Caco-2 (cell line): ENCODE measurements at regions of chr1 and their contacts with region 1.

Region 1: DNA sequence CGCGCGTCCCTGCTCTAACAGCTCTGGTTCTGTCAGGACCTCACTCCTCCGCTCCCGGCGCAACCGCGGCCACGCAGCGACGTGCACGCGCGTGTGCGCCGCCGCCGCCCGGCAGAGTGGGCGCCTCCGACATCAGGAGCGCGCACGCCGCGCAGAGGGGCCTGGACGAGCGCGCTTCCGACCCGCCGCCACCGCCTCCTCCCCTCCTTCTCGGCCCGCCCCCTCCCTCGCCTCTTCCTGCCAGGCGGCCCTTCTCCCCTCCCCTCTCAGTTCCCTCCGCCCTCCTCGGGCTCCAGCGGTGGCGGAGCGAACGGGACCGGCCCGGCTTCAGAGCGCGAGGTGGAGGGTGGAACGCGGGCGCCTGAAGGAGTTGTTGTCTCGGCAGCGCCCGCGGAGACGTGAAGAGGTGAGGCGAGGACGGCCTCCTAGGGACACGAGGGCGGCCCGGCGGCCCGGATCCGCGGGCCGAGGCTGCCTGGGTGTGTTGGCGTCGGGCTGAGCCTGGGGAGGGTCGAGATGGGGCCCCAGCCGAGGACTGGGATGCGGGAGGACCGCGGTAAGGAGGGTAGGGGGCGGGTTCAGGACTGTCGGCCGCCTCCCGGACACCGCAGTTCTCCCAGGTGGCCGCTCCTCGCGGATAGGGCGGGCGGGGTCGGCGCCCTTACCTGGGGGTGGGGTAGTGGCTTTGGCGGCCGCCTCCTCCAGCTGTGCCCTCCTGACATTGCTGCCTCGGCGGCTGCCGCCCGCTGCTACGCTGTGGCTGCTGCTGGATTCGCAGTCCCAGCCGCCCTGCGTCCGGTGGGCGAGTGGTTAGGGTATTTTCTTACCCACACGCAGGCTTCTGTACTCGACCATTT is at the start of gene RABGAP1L:
- DNase-seq: peak; percentile 95
- H3K4me3 ChIP-seq: peak within 1 kb of the TSS; percentile 98
- H3K4me3 Mint-ChIP-seq: peak within 1 kb of the TSS; percentile 87
- H3K27ac Mint-ChIP-seq: peak within 1 kb of the TSS; percentile 50
- H3K4me1 ChIP-seq: peaks cover 12% of the 10 kb centered on the region
- H3K4me1 Mint-ChIP-seq: peaks cover 16% of the 10 kb centered on the region
- H3K27me3 ChIP-seq: no peaks in the 10 kb centered on the region
- H3K27me3 Mint-ChIP-seq: no peaks in the 10 kb centered on the region
- CTCF ChIP-seq: no peak
- total RNA-seq, gene RABGAP1L: 20.3 and 20.4 TPM in 2 replicates

Region 2: GRCh38 chr1:173867753-173868265 is 291.7 kb before region 1 on chr1 and contains the start of gene GAS5:
- CTCF ChIA-PET with region 1: no interaction called
- POLR2A ChIA-PET with region 1: no interaction called
- intact Hi-C with region 1: loop called (anchors 5 kb)
- DNase-seq: peak; percentile 99 to 100
- H3K4me3 ChIP-seq: peak within 1 kb of the TSS; percentile 82
- H3K4me3 Mint-ChIP-seq: peak within 1 kb of the TSS; percentile 99
- H3K27ac Mint-ChIP-seq: peak within 1 kb of the TSS; percentile 100
- H3K4me1 ChIP-seq: peaks cover 13% of the 10 kb centered on the region; the same call in 1 of the 2 replicates
- H3K4me1 Mint-ChIP-seq: peaks cover 12% of the 10 kb centered on the region
- H3K27me3 ChIP-seq: no peaks in the 10 kb centered on the region
- H3K27me3 Mint-ChIP-seq: peaks cover 5% of the 10 kb centered on the region
- CTCF ChIP-seq: no peak
- total RNA-seq, gene GAS5: 559 and 641 TPM in 2 replicates

Region 3: DNA sequence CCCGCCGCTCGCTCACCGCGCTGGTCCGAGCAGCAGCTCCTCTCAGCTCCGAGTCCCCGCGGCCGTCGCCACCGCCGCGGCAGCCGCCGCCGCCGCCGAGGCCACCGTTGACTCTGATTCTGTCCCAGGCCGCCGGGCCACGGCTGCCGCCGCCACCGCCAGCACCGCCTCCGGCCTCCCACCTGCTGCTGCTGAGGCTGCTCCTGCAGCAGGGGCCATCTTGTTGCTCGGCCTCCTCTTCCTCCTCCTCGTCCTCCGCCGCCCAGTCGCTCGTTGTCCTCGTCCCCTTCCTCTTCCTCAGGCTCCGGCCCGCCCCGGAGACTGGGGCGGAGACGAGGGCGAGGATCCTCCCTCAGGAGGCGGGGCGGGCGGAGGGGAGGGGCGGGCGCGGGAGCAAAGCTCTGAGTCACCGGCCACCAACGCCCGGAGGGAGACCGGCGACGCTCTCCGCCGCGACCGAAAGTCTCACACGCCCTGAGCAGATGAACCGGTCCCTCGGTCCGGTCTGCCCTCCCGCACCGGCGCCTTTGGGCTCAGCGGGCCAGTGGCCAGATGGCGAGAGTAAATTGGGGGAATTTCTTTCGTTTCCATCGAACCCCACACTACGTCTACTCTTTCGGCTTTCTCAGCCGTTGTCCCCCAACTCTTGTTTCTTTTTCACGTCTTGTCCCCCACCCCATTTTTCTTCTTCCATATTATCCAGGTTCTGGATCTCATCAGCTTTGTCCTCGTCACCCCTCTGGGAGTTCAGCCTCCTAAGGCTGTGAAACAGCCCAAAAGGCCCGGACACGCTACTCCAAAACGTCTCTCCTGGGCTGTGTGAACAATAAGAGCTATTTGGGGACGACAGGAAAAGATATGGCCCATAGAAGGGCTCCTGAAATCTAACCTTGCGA is 137.2 kb before region 1 on chr1 and contains the start of gene RC3H1:
- CTCF ChIA-PET with region 1: no interaction called
- POLR2A ChIA-PET with region 1: no interaction called
- intact Hi-C with region 1: loop called (anchors 1 kb)
- DNase-seq: peak; percentile 88
- H3K4me3 ChIP-seq: peak within 1 kb of the TSS; percentile 83
- H3K4me3 Mint-ChIP-seq: peak within 1 kb of the TSS; percentile 84
- H3K27ac Mint-ChIP-seq: peak within 1 kb of the TSS; percentile 97
- H3K4me1 ChIP-seq: peaks cover 14% of the 10 kb centered on the region
- H3K4me1 Mint-ChIP-seq: peaks cover 7% of the 10 kb centered on the region
- H3K27me3 ChIP-seq: no peaks in the 10 kb centered on the region
- H3K27me3 Mint-ChIP-seq: no peaks in the 10 kb centered on the region
- CTCF ChIP-seq: no peak
- total RNA-seq, gene RC3H1: 29.2 and 36.3 TPM in 2 replicates

Region 4: GRCh38 chr1:174040387-174040786 is 119.1 kb before region 1 on chr1:
- CTCF ChIA-PET with region 1: no interaction called
- POLR2A ChIA-PET with region 1: no interaction called
- intact Hi-C with region 1: no loop called
- DNase-seq: no peak
- H3K4me3 ChIP-seq: no peak overlapping the region
- H3K4me3 Mint-ChIP-seq: no peak overlapping the region
- H3K27ac Mint-ChIP-seq: no peak overlapping the region
- H3K4me1 ChIP-seq: no peaks in the 10 kb centered on the region
- H3K4me1 Mint-ChIP-seq: no peaks in the 10 kb centered on the region
- H3K27me3 ChIP-seq: no peaks in the 10 kb centered on the region
- H3K27me3 Mint-ChIP-seq: no peaks in the 10 kb centered on the region
- CTCF ChIP-seq: no peak

Region 5: DNA sequence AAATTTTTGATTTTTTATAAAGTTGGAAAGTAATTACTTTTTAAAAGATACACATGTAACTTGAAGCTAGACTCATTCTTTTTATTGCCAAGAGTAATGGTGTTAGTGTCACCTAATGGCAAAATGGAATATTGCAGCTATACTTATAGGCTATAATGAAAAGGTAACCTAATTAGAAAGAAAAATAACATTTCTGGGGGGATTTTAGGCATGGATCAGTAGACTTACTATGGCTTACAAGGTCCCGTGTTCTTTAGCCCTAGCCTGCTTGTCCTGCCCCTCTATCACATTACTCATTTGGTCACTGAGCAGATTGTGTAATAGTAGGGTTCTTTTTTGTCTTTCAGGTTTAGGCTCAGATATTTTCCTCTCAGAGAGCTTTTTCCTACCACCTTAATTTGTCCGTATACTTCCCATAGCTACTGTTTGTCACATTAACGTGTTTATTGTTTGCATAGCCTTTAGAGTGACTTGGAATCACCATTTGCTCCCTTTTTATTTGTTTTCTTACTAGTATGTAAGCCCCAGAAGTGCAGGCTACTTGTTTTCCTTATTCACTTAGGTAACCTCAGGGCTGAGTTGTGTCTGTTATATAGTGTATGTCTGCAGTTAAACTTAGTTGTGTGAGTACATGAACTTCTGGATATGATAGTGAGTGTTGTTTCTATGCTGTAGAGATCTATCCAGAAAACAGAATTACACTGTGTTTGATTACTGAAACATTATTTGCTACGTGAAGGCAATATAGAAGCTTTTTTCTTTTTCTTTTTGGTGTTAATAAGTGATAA is 58.5 kb after region 1 on chr1:
- CTCF ChIA-PET with region 1: interaction called, 4 read pairs
- POLR2A ChIA-PET with region 1: no interaction called
- intact Hi-C with region 1: loop called (anchors 5 kb)
- DNase-seq: peak in 1 of 2 experiments; percentile 24
- H3K4me3 ChIP-seq: no peak overlapping the region
- H3K4me3 Mint-ChIP-seq: no peak overlapping the region
- H3K27ac Mint-ChIP-seq: no peak overlapping the region
- H3K4me1 ChIP-seq: no peaks in the 10 kb centered on the region
- H3K4me1 Mint-ChIP-seq: no peaks in the 10 kb centered on the region
- H3K27me3 ChIP-seq: no peaks in the 10 kb centered on the region
- H3K27me3 Mint-ChIP-seq: no peaks in the 10 kb centered on the region
- CTCF ChIP-seq: peak; percentile 64 to 75

Region 6: GRCh38 chr1:174743654-174744561 is 584.4 kb after region 1 on chr1:
- CTCF ChIA-PET with region 1: no interaction called
- POLR2A ChIA-PET with region 1: no interaction called
- intact Hi-C with region 1: loop called (anchors 10 kb)
- DNase-seq: no peak
- H3K4me3 ChIP-seq: no peak overlapping the region
- H3K4me3 Mint-ChIP-seq: no peak overlapping the region
- H3K27ac Mint-ChIP-seq: no peak overlapping the region
- H3K4me1 ChIP-seq: no peaks in the 10 kb centered on the region
- H3K4me1 Mint-ChIP-seq: no peaks in the 10 kb centered on the region
- H3K27me3 ChIP-seq: no peaks in the 10 kb centered on the region
- H3K27me3 Mint-ChIP-seq: no peaks in the 10 kb centered on the region
- CTCF ChIP-seq: peak in 1 of 2 experiments; percentile 63